HEK293 (cell line): ENCODE measurements at regions of chr7 and their contacts with region 1.

Region 1: DNA sequence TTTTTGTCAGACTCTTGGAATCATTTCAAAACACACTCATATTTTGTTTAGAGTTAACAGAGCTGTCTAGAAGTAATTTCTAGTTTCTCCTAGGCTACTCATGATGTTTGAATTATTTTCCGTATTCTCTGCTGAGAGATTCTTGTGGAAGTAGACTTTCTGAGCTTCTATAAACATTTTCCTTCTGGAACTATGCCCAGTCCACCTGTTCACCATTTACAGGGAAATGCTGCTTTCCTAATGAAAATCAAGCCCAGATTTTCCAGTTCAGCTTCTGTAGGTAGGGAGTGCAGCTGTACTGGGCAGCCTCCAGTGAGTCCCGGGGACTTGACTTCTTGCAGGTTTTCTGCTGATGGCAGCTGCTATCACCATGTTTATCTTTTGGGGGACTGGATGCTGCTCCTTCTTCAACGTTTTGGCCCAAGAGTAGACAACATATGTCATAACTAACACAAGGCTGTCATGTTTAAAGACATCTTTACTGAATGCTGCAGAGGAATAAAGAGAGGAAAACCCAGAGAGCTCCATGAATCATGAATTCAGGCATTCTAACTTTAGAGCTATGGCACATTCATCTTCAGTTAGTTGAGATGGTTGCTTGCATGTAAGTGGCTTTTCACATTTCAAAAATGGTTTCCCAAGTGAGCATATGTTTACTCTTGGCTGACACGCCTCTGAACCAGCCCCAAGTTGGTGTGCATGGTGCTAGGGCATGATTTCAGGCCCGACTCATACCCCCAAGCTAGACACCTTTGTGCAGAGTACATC is 85.6 kb downstream of the SDK1 start:
- H3K4me3 ChIP-seq: no peak overlapping the region
- H3K27ac ChIP-seq: no peak overlapping the region
- H3K4me1 ChIP-seq: no peaks in the 10 kb centered on the region; the same call in 1 of the 2 replicates
- CTCF ChIP-seq: no peak

Region 2: DNA sequence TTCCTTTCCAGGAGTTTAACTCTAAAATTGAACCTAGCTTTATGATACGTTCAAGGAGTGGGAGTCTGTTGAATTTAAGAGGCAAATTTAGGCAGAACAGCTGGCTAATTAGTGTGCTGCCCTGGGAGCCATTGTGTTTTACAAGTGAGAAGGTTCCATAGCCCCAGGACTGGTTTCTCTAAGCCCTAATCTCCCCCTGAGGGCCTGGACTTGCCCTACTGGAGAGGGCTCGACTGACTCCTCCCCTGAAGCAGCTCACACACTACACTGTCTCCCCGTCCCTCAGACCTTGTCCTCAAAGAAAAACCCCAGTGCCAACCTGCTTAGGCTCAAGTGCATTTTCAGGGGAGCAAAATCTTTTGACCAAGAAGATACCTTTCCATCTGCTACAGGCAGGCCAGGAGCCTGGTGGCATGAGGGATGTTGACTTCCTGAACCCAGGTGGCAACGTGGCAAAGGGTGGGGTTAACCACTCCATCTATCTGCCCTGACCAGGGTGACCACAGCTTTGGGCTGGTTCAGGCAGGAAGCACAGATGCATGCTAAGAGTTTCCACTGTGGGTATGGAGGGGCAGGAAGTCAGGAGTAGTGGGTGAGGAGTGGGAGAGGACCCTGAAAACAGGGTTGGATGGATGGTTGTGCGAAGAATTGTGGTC is 274.0 kb before region 1 on chr7:
- CTCF ChIA-PET with region 1: no interaction called
- POLR2A ChIA-PET with region 1: no interaction called
- H3K4me3 ChIP-seq: no peak overlapping the region
- H3K27ac ChIP-seq: no peak overlapping the region
- H3K4me1 ChIP-seq: no peaks in the 10 kb centered on the region
- CTCF ChIP-seq: no peak

Region 3: GRCh38 chr7:3272691-3273181 is 113.9 kb before region 1 on chr7:
- CTCF ChIA-PET with region 1: no interaction called
- POLR2A ChIA-PET with region 1: no interaction called
- H3K4me3 ChIP-seq: no peak overlapping the region
- H3K27ac ChIP-seq: no peak overlapping the region
- H3K4me1 ChIP-seq: no peaks in the 10 kb centered on the region; the same call in 1 of the 2 replicates
- CTCF ChIP-seq: no peak

Region 4: DNA sequence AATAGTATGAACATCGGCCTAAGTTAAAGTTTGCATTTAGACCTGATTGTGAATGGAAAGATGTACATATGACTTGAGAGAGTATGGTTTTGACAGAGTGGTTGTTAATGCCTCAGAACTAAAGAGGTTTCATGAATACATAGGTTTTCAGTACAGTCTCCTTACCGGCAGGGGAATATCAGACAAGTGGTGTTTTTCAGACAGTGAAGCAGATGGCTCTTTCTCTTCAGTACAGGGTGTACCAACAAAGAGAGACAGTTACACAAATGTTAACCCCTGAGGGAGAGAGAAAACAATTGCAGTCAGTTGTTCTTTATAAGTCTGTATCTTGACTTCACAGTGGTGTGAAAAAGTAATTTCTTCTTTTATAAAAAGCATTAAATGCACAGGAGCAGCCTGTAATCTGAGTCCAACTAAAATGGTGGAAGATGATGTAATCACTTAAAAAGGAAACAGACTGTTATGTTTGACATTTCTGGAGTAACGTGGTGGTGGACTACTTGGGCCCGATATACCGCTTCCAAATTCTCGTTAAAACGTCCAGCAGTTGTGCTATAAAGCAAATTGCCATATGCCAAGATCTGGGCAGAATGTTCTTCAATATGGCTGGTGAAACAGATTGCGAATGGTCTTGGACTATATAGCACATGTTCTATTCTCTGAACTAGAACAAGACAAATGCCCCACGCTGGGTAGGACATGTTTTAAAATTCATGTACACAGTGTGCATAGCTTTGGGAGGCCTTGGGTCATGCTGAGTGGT is 16.4 kb before region 1 on chr7:
- CTCF ChIA-PET with region 1: interaction called, 12 read pairs
- POLR2A ChIA-PET with region 1: no interaction called
- H3K4me3 ChIP-seq: no peak overlapping the region
- H3K27ac ChIP-seq: no peak overlapping the region
- H3K4me1 ChIP-seq: peaks cover 9% of the 10 kb centered on the region; the same call in 1 of the 2 replicates
- CTCF ChIP-seq: no peak

Region 5: DNA sequence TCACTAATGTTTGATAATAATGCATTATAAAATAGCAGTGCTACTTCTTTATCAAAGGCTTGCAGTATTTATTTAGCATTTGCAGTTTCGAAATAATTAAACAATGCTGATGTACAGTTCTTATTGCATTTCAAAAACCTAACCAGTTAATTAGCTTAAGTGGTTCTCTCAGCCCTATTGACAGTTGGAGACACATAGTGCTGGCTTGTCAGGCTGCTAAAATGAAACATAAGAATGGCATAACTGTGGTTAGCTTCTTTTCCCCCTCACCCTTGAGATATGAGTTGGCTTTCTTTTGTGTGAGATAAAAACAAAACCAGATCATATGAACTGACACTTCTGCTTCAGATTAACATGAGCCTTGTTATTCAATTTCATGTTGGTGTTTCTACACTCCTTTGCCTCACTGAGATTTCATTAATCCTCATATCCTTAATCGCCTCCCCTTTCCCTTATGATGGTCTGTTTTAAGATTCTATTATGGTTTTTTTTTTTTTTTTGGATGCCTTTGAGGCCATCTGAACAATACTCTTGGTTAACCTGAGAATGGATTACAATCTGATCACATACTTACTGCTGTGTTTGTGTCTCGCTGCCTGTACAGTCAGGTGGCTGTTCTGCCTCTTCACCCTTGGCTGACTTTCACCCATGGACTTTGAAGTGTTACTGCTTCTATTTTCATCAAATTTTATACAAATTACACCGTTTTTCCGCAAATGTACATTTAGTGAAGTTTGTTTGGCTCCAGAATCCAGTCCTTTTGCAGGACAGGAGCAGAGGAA is 22.4 kb after region 1 on chr7:
- CTCF ChIA-PET with region 1: no interaction called
- POLR2A ChIA-PET with region 1: no interaction called
- H3K4me3 ChIP-seq: no peak overlapping the region
- H3K27ac ChIP-seq: no peak overlapping the region
- H3K4me1 ChIP-seq: peaks cover 45% of the 10 kb centered on the region
- CTCF ChIP-seq: no peak